Activated T-helper 1 cell treated with anti-CD3 and anti-CD28 coated beads, Interleukin-12 subunit alpha, Interleukin-12 subunit beta, Interleukin-2, Interleukin-4 antibody, amounts not matched to agents 30 ng/mL and 10 ng/mL and 1 ng/mL, durations not matched to agents 14 hours and 24 hours and 36 hours (primary cell): ENCODE measurements at regions of chr14 and their contacts with region 1.

Region 1: DNA sequence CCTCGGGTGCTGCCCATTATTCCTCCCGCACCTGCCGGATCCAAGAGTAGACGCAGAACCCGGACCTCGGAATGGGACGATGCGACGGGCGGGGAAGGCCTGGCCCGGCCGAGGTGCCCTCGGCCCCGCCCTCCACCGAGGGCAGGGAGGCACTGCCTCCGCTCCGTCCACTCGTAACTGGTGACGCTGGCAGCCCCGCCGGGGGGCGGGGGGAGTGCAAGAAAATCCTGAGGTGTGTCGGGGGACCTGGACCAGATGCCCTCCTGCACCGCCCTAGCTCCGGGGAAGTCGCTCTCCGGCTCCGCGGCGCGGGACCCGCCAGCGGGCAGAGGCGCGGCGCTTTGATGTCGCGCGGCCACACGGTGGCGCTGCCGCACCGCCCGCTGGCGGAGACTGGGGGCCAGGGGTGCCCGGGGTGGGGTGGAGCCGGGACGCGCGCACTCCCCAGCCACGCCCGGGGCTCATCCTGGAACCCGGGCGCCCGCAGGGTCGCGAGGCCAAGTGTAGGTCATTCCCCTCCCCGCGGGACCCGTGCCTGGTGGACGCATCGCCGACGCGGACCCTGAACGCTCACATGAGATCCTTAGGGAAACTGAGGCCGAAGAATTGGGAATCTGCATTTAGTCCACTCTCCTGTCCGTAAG is 202.8 kb downstream of the TTC8 start:
- DNase-seq: peak; percentile 36
- H3K4me3 Mint-ChIP-seq: peak overlapping the region; percentile 64
- H3K27ac Mint-ChIP-seq: no peak overlapping the region
- H3K4me1 Mint-ChIP-seq: peaks cover 7% of the 10 kb centered on the region
- H3K27me3 Mint-ChIP-seq: peaks cover 49% of the 10 kb centered on the region

Region 2: DNA sequence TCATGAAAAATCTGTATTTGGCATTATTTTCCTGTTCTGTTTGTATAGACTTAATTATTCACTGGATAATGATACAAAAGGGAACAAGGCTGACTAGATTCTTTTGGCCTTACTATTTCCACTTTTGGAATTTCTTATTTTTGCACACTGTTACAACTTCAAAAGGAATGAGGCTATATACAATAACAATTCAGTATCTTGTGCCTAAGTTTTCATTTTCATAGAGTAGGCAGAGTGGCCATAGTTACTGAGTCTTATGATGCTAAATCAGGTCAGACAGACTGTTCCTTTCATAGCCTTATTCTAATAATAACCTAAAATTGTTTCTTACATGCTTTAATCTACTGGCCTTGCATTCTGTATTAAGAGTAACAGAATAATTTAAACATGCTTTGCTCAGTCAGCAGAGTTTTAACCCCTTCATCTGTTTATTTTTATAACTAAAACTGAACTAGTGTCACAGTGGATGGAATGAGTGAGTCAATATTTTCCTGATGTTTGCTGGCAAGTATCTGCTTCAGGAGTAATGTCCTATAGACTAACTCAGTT is 192.3 kb before region 1 on chr14:
- intact Hi-C with region 1: no loop called
- DNase-seq: no peak
- H3K4me3 Mint-ChIP-seq: no peak overlapping the region
- H3K27ac Mint-ChIP-seq: no peak overlapping the region
- H3K4me1 Mint-ChIP-seq: no peaks in the 10 kb centered on the region
- H3K27me3 Mint-ChIP-seq: peaks cover 17% of the 10 kb centered on the region

Region 3: DNA sequence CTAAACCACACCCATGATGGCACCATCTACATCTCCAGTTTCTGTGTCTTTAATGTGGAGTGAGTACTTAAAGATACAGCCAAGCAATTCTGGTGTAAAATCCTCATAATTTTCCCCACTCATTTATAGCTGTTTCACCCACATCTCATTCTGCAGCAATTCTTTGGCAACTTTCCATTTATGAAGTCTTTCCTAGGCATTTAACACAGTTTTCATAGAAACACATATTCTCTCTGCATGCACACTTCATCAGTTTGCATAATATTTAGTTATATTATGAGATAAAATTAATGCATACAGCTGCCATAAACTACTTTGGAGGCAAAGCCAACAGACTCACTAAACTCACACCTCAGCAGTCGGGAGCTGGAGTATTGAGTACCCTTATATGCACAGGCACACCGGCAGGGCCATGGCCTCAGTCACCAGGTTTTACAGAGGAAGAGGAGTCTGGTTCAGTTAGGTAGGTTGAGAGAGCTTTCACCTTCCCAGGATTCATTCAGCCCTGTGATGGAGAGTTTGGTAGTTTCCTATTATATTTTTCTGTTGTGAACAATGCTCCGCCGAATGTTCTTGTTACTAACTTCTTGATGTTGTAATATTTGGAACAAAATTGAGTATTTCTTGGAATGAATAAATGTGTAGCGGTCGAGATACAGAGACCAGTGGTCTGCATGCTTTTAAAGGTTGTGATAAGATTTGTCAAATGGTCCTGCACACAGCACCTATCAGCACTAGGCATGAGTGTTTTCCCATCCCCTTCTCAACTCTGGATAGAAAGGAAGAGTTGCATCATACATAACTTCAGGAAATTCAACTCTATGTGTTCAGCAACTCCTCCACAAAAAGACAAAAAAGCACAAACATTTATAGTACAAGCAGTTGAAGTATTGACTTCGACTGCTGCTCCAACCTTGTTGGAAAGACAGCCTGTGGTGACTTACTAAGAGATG is 79.3 kb before region 1 on chr14:
- intact Hi-C with region 1: no loop called
- DNase-seq: no peak
- H3K4me3 Mint-ChIP-seq: no peak overlapping the region
- H3K27ac Mint-ChIP-seq: no peak overlapping the region
- H3K4me1 Mint-ChIP-seq: no peaks in the 10 kb centered on the region
- H3K27me3 Mint-ChIP-seq: peaks cover 1% of the 10 kb centered on the region

Region 4: DNA sequence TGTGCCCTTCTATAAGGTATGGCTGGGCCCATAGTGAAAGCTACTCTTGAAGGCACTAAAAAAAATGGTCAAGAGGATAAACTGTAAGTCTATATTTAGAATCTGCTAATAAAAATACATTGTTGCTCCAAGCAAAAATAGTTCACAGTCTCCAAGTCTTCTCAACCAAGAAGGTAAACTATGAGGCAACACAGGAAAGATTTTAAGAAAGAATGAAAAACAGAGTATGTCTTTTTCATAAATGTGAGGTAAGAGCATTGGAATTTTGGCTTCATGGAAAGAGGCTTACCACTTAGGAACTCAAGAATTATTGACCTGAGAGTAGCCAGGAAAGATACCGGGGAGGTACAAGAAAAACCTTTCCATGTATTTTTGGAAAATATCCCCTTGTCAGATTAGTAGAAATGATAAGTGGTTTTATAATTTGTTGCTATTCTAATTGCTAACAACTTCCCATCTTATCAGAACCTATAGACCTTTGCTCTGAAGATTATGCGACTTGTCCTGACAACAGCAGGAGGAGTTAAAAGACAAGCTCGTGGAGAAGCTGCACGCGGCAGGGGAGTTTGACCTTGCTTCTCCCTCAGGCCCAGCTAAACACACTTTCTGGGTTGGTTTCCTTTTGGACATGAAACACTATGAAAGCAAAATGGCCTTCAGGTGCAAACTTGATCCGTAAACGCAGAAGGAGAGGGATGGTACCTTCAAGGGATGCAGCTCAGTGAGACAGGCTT is 151.8 kb after region 1 on chr14:
- intact Hi-C with region 1: loop called (anchors 5 kb)
- DNase-seq: no peak
- H3K4me3 Mint-ChIP-seq: no peak overlapping the region
- H3K27ac Mint-ChIP-seq: peak overlapping the region; percentile 25
- H3K4me1 Mint-ChIP-seq: peaks cover 6% of the 10 kb centered on the region
- H3K27me3 Mint-ChIP-seq: no peaks in the 10 kb centered on the region

Region 5: GRCh38 chr14:89899917-89900663 is 872.9 kb after region 1 on chr14:
- intact Hi-C with region 1: loop called (anchors 1 kb)
- DNase-seq: no peak
- H3K4me3 Mint-ChIP-seq: no peak overlapping the region
- H3K27ac Mint-ChIP-seq: no peak overlapping the region
- H3K4me1 Mint-ChIP-seq: peaks cover 7% of the 10 kb centered on the region
- H3K27me3 Mint-ChIP-seq: peaks cover 5% of the 10 kb centered on the region

Region 6: DNA sequence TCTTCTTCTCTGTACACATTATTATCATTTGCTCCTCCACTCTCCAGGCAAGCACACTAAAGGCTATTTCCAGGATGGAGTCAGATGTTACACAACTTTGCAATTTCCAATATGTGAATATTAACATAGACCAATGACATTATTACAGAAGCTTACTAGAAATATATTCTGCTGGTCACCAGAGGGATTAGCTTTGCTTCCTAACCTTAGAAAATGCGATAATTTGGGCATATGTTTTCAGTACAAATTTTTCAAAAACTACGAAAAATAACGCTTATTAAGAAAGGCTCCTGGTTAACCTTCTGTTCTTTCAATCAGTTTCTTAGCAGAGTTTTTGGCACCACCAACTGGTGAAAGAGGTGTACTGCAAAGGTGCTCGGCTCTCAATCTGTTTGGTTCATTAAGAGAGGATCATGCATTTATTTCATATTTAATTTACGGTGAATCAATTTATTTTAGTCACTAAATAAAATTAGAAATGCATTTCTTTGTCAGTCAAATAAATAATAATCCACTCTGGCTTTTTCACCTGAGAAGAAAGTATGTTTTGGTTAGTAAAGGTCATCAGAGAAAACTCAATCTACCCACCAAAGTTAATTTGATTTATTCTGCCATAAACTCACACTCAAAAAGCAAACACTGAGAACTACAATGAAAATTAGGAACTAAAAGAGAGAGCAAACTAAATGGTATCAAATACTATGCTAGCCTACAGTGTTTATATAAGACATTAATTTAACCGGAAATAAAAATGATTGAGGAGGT is 888.1 kb after region 1 on chr14:
- intact Hi-C with region 1: loop called (anchors 1 kb)
- DNase-seq: peak; percentile 38
- H3K4me3 Mint-ChIP-seq: no peak overlapping the region
- H3K27ac Mint-ChIP-seq: no peak overlapping the region
- H3K4me1 Mint-ChIP-seq: peaks cover 4% of the 10 kb centered on the region
- H3K27me3 Mint-ChIP-seq: peaks cover 12% of the 10 kb centered on the region

Region 7: GRCh38 chr14:89936658-89937185 is 909.5 kb after region 1 on chr14:
- intact Hi-C with region 1: loop called (anchors 2 kb)
- DNase-seq: no peak
- H3K4me3 Mint-ChIP-seq: no peak overlapping the region
- H3K27ac Mint-ChIP-seq: no peak overlapping the region
- H3K4me1 Mint-ChIP-seq: no peaks in the 10 kb centered on the region
- H3K27me3 Mint-ChIP-seq: peaks cover 2% of the 10 kb centered on the region

Region 8: GRCh38 chr14:90235179-90235976 is 1208.2 kb after region 1 on chr14:
- intact Hi-C with region 1: loop called (anchors 2 kb)
- DNase-seq: peak; percentile 59
- H3K4me3 Mint-ChIP-seq: no peak overlapping the region
- H3K27ac Mint-ChIP-seq: no peak overlapping the region
- H3K4me1 Mint-ChIP-seq: no peaks in the 10 kb centered on the region
- H3K27me3 Mint-ChIP-seq: peaks cover 5% of the 10 kb centered on the region